ENCODE measurements at regions of chr17 and their contacts with region 1.

Region 1: DNA sequence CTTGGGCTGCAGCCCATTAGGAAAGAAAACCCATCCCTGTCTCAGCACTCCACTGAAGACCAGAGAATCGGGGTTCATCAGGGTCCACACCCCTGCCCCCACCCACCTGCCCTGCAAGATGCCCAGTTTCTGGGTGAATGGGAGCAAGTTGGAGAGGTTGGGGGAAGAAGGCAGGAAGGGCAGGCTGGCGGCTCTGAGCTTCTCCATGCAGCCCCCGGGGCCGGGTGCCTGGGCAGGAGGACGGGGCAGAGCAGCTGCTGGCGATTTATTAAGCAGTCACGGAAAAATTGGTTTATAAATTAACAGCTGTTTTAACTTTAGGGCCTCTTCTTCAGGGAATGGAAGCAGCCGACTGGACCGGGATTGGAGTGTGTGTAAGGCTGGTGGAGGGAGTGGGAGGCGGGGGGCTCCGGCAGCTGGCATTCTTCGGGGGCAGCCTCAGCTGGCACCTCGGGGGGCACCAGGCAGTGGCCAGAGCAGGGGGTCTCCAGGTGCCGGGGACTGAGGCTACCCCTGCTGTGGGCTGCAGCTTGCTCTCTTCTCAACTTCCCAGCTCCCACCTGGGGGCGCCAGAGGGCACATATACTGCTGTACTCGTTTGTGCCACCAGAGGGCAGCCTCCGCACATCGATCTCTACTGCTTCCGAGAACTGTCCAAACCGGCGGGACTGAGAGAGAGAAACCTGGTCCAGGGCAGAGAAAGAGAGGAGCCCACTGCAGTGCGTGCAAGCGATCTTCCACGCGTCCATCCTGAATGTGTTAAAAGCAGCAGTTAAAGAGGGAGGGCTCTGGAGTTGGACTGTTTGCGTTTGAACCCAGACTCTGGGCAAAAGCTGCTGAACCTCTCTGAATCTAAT is 5.0 kb upstream of the PPP1R1B start:
- DNase-seq: peak; percentile 92 to 93
- ATAC-seq: peak; percentile 86 to 97 (median 87)
- H3K4me3 ChIP-seq: no peak overlapping the region
- H3K4me3 Mint-ChIP-seq: peak overlapping the region; percentile 57
- H3K27ac ChIP-seq: peak overlapping the region; percentile 5
- H3K27ac Mint-ChIP-seq: peak overlapping the region in 1 of 2 donors; percentile 36
- H3K4me1 ChIP-seq: peaks cover 38% of the 10 kb centered on the region
- H3K4me1 Mint-ChIP-seq: peaks cover 23 to 38% of the 10 kb centered on the region in 2 donors
- H3K27me3 ChIP-seq: peaks cover 9% of the 10 kb centered on the region
- H3K27me3 Mint-ChIP-seq: peaks cover 10 to 21% of the 10 kb centered on the region in 2 donors
- CTCF ChIP-seq: peak; percentile 100

Region 2: GRCh38 chr17:39393736-39394135 is 228.0 kb before region 1 on chr17:
- intact Hi-C with region 1: no loop called
- DNase-seq: no peak
- ATAC-seq: no peak
- H3K4me3 ChIP-seq: no peak overlapping the region
- H3K4me3 Mint-ChIP-seq: no peak overlapping the region
- H3K27ac ChIP-seq: no peak overlapping the region
- H3K27ac Mint-ChIP-seq: no peak overlapping the region
- H3K4me1 ChIP-seq: no peaks in the 10 kb centered on the region
- H3K4me1 Mint-ChIP-seq: peaks cover 10 to 13% of the 10 kb centered on the region in 2 donors
- H3K27me3 ChIP-seq: no peaks in the 10 kb centered on the region
- H3K27me3 Mint-ChIP-seq: no peaks in the 10 kb centered on the region
- CTCF ChIP-seq: no peak

Region 3: GRCh38 chr17:39517224-39517623 is 104.5 kb before region 1 on chr17:
- intact Hi-C with region 1: no loop called
- DNase-seq: no peak
- ATAC-seq: no peak
- H3K4me3 ChIP-seq: no peak overlapping the region
- H3K4me3 Mint-ChIP-seq: no peak overlapping the region
- H3K27ac ChIP-seq: no peak overlapping the region
- H3K27ac Mint-ChIP-seq: no peak overlapping the region
- H3K4me1 ChIP-seq: no peaks in the 10 kb centered on the region
- H3K4me1 Mint-ChIP-seq: peaks cover 0 to 6% of the 10 kb centered on the region in 2 donors
- H3K27me3 ChIP-seq: no peaks in the 10 kb centered on the region
- H3K27me3 Mint-ChIP-seq: no peaks in the 10 kb centered on the region
- CTCF ChIP-seq: no peak

Region 4: GRCh38 chr17:39636927-39637736 is 15.4 kb after region 1 on chr17 and contains the start of gene STARD3:
- intact Hi-C with region 1: loop called (anchors 2 kb)
- DNase-seq: peak; percentile 87 to 95
- ATAC-seq: peak; percentile 91 to 95 (median 92)
- H3K4me3 ChIP-seq: peak within 1 kb of the TSS; percentile 86
- H3K4me3 Mint-ChIP-seq: peak within 1 kb of the TSS; percentile 95
- H3K27ac ChIP-seq: peak within 1 kb of the TSS; percentile 97
- H3K27ac Mint-ChIP-seq: peak within 1 kb of the TSS; percentile 86 to 92
- H3K4me1 ChIP-seq: peaks cover 60% of the 10 kb centered on the region
- H3K4me1 Mint-ChIP-seq: peaks cover 48 to 61% of the 10 kb centered on the region in 2 donors
- H3K27me3 ChIP-seq: no peaks in the 10 kb centered on the region
- H3K27me3 Mint-ChIP-seq: no peaks in the 10 kb centered on the region
- CTCF ChIP-seq: no peak
- total RNA-seq, gene STARD3: 97.1 to 115 (median 105) TPM

Region 5: DNA sequence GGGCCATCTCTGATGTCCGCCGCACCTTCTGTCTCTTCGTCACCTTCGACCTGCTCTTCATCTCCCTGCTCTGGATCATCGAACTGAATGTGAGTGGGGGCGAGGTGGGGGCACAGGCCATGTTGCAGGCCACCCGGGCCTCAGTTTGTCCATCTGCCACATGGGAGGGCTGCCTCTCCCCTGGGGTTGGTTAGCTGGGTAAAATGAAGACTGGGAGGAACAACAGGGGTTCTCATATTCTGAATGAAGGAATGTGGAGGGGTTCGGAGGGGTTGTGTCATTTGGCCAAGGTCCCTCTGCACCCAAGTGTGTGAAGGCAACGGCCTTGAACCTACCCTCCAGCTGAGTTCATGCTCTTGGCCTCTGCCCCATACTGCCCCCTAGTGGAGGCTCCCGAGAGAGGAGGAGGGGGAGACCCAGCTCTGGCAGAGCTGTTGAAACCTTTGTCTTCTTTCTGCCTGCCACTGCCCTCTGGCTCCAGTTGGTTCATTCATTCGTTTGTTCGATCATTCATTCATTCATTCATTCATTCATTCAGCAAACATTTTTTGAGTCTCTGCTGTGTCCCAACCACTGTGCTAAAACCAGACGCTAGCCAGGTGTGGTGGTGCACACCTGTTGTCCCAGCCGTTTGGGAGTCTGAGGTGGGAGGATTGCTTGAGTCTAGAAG is 32.0 kb after region 1 on chr17:
- intact Hi-C with region 1: no loop called
- DNase-seq: peak; percentile 77 to 87
- ATAC-seq: peak; percentile 81 to 98 (median 95)
- H3K4me3 ChIP-seq: no peak overlapping the region
- H3K4me3 Mint-ChIP-seq: no peak overlapping the region
- H3K27ac ChIP-seq: no peak overlapping the region
- H3K27ac Mint-ChIP-seq: peak overlapping the region in 1 of 2 donors; percentile 59
- H3K4me1 ChIP-seq: peaks cover 6% of the 10 kb centered on the region
- H3K4me1 Mint-ChIP-seq: peaks cover 37 to 58% of the 10 kb centered on the region in 2 donors
- H3K27me3 ChIP-seq: no peaks in the 10 kb centered on the region
- H3K27me3 Mint-ChIP-seq: no peaks in the 10 kb centered on the region
- CTCF ChIP-seq: peak; percentile 93

Region 6: GRCh38 chr17:39754161-39754951 is 132.6 kb after region 1 on chr17:
- intact Hi-C with region 1: loop called (anchors 1 kb)
- DNase-seq: peak; percentile 97 to 98
- ATAC-seq: peak; percentile 72 to 93 (median 79)
- H3K4me3 ChIP-seq: peak overlapping the region; percentile 47
- H3K4me3 Mint-ChIP-seq: peak overlapping the region; percentile 83
- H3K27ac ChIP-seq: peak overlapping the region; percentile 96
- H3K27ac Mint-ChIP-seq: peak overlapping the region; percentile 94 to 99
- H3K4me1 ChIP-seq: peaks cover 70% of the 10 kb centered on the region
- H3K4me1 Mint-ChIP-seq: peaks cover 57 to 58% of the 10 kb centered on the region in 2 donors
- H3K27me3 ChIP-seq: no peaks in the 10 kb centered on the region
- H3K27me3 Mint-ChIP-seq: no peaks in the 10 kb centered on the region
- CTCF ChIP-seq: peak; percentile 87

Region 7: DNA sequence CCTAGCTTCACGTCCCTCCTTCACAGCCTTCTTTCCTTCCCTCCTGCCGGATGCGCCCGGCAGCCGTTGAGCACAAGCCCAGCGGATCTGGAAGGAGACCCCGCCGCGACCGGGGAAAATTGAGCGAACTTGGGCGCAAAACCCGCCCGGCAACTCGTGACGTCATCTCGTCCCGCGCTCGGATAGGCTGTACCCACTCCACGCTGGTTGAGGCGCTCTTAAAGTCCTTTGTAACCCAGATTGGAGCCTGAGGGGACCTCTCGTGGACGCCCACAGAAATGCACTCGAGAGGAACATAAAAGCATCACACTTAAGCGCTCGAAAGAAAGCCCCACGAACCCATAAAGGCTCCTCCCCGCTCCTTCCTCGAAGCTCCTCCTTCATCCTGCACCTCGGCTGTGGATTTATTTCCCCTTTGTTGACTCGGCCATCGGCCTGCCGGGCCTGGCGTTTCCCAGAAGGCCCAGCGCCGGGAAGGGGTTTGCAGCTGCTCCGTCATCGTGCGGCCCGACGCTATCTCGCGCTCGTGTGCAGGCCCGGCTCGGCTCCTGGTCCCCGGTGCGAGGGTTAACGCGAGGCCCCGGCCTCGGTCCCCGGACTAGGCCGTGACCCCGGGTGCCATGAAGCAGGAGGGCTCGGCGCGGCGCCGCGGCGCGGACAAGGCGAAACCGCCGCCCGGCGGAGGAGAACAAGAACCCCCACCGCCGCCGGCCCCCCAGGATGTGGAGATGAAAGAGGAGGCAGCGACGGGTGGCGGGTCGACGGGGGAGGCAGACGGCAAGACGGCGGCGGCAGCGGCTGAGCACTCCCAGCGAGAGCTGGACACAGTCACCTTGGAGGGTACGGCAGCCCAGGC is 358.8 kb after region 1 on chr17 and contains the start of gene PSMD3:
- intact Hi-C with region 1: loop called (anchors 1 kb)
- DNase-seq: peak; percentile 97 to 100
- ATAC-seq: peak; percentile 89 to 97 (median 91)
- H3K4me3 ChIP-seq: peak within 1 kb of the TSS; percentile 70
- H3K4me3 Mint-ChIP-seq: peak within 1 kb of the TSS; percentile 98
- H3K27ac ChIP-seq: peak within 1 kb of the TSS; percentile 91
- H3K27ac Mint-ChIP-seq: peak within 1 kb of the TSS; percentile 99
- H3K4me1 ChIP-seq: peaks cover 18% of the 10 kb centered on the region
- H3K4me1 Mint-ChIP-seq: peaks cover 27 to 29% of the 10 kb centered on the region in 2 donors
- H3K27me3 ChIP-seq: no peaks in the 10 kb centered on the region
- H3K27me3 Mint-ChIP-seq: no peaks in the 10 kb centered on the region
- CTCF ChIP-seq: peak; percentile 71
- total RNA-seq, gene PSMD3: 66.1 to 83.8 (median 78.9) TPM